ENCODE measurements at regions of chr15 and their contacts with region 1.

Region 1: DNA sequence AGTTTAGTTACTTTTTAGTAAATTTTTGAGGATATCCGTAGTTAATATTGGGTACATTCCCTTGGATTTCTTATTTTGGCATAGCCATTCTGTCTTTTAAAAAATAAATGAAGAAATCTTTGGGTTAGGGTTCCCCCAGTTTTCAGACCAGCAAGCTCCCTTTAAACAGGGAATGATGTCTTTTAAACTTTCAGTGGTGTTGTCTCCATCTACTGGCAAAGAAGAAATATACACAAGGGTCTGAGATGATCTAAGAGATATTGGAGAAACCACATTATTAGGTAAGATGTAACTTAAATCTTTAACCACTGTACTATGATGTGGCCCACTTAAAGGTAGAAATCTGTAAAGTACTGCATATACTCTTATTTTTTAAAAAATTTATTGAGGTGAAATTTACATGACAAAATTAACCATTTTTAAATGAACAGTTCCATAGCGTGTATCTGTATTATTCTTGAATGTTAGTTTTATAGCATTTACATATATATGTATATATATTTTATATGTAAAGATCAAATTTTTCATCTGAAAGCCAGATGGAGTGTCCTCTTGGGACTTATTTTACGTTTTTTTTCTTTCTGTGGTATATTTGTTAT is 35.1 kb upstream of the EIF3J start:
- DNase-seq: no peak
- ATAC-seq: no peak
- H3K4me3 Mint-ChIP-seq: no peak overlapping the region
- H3K27ac Mint-ChIP-seq: no peak overlapping the region
- H3K4me1 Mint-ChIP-seq: no peaks in the 10 kb centered on the region
- H3K27me3 Mint-ChIP-seq: no peaks in the 10 kb centered on the region
- CTCF ChIP-seq: no peak

Region 2: GRCh38 chr15:43903864-43904290 is 598.0 kb before region 1 on chr15:
- CTCF ChIA-PET with region 1: interaction called, 7 read pairs
- POLR2A ChIA-PET with region 1: no interaction called
- intact Hi-C with region 1: loop called (anchors 1 kb)
- DNase-seq: peak; percentile 24
- ATAC-seq: peak; percentile 69
- H3K4me3 Mint-ChIP-seq: no peak overlapping the region
- H3K27ac Mint-ChIP-seq: no peak overlapping the region
- H3K4me1 Mint-ChIP-seq: peaks cover 6% of the 10 kb centered on the region
- H3K27me3 Mint-ChIP-seq: no peaks in the 10 kb centered on the region
- CTCF ChIP-seq: no peak

Region 3: DNA sequence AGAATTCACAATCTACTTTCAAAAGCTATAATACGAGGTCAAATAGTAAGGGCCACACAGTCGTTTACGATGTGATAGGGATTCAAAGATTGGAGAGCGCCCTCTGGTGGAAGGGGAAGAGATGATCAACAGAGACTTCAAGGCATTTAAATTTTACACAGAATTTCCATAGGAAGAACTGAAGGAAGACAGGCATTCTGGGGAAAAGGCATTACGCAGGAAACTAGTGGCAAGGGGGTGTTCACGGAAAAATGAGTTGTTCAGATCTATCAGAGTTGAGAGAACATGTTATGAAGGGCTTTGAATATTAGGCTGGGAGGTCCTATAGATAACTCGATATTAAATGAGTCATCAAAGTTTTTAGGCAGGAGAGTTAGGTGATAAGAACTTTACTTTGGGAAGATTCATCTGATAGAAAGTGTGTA is 435.5 kb before region 1 on chr15:
- CTCF ChIA-PET with region 1: interaction called, 3 read pairs
- POLR2A ChIA-PET with region 1: no interaction called
- intact Hi-C with region 1: loop called (anchors 10 kb)
- DNase-seq: peak; percentile 17
- ATAC-seq: peak; percentile 52
- H3K4me3 Mint-ChIP-seq: no peak overlapping the region
- H3K27ac Mint-ChIP-seq: no peak overlapping the region
- H3K4me1 Mint-ChIP-seq: peaks cover 1% of the 10 kb centered on the region
- H3K27me3 Mint-ChIP-seq: peaks cover 4% of the 10 kb centered on the region
- CTCF ChIP-seq: peak; percentile 30

Region 4: DNA sequence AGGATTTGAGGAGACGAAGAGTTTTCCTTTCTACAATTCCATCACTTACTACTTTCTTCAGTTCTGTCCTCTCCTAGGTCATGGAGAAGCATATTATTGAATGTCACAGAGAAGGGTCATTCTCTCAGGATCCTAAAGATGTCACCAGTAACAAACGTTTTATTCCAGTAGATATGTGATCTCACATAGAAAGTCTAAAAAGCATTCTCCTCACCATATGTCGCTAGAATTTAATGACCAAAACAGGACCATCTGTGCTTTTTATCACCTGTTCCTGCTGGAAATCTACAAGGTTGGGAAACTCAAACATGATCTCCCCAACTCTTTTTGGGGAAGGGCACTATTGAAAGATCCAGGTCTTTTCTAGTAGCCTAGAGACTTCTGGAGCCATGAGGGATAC is 282.8 kb before region 1 on chr15:
- CTCF ChIA-PET with region 1: interaction called, 7 read pairs
- POLR2A ChIA-PET with region 1: no interaction called
- intact Hi-C with region 1: loop called (anchors 2 kb)
- DNase-seq: no peak
- ATAC-seq: no peak
- H3K4me3 Mint-ChIP-seq: no peak overlapping the region
- H3K27ac Mint-ChIP-seq: no peak overlapping the region
- H3K4me1 Mint-ChIP-seq: peaks cover 2% of the 10 kb centered on the region
- H3K27me3 Mint-ChIP-seq: peaks cover 15% of the 10 kb centered on the region
- CTCF ChIP-seq: no peak

Region 5: DNA sequence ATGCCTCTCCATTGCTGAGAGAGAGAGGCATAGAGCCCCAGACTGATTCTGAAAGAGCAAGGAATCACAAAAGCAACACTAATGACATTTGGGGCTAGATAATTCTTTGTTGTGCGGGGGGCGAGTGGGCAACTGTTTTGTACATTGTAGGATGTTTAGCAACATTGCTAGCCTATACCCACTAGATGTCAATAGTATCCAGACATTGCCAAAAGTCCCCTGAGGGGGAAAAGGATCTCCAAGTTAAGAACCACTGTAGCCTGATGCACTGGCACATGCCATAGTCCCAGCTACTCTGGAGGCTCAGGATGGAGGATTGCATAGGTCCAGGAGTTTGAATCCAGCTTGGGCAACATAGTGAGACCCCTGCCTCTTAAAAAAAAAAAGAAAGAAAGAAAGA is 236.1 kb before region 1 on chr15:
- CTCF ChIA-PET with region 1: interaction called, 3 read pairs
- POLR2A ChIA-PET with region 1: no interaction called
- intact Hi-C with region 1: loop called (anchors 1 kb)
- DNase-seq: no peak
- ATAC-seq: no peak
- H3K4me3 Mint-ChIP-seq: no peak overlapping the region
- H3K27ac Mint-ChIP-seq: no peak overlapping the region
- H3K4me1 Mint-ChIP-seq: no peaks in the 10 kb centered on the region
- H3K27me3 Mint-ChIP-seq: peaks cover 3% of the 10 kb centered on the region
- CTCF ChIP-seq: no peak

Region 6: GRCh38 chr15:44468713-44469385 is 33.0 kb before region 1 on chr15:
- CTCF ChIA-PET with region 1: no interaction called
- POLR2A ChIA-PET with region 1: no interaction called
- intact Hi-C with region 1: no loop called
- DNase-seq: no peak
- ATAC-seq: no peak
- H3K4me3 Mint-ChIP-seq: no peak overlapping the region
- H3K27ac Mint-ChIP-seq: no peak overlapping the region
- H3K4me1 Mint-ChIP-seq: peaks cover 12% of the 10 kb centered on the region
- H3K27me3 Mint-ChIP-seq: no peaks in the 10 kb centered on the region
- CTCF ChIP-seq: no peak

Measured in activated B cell treated with CpG ODN at 0.5 μM for 24 hours (primary cell).